ENCODE measurements at regions of chr7 and their contacts with region 1.

Region 1: DNA sequence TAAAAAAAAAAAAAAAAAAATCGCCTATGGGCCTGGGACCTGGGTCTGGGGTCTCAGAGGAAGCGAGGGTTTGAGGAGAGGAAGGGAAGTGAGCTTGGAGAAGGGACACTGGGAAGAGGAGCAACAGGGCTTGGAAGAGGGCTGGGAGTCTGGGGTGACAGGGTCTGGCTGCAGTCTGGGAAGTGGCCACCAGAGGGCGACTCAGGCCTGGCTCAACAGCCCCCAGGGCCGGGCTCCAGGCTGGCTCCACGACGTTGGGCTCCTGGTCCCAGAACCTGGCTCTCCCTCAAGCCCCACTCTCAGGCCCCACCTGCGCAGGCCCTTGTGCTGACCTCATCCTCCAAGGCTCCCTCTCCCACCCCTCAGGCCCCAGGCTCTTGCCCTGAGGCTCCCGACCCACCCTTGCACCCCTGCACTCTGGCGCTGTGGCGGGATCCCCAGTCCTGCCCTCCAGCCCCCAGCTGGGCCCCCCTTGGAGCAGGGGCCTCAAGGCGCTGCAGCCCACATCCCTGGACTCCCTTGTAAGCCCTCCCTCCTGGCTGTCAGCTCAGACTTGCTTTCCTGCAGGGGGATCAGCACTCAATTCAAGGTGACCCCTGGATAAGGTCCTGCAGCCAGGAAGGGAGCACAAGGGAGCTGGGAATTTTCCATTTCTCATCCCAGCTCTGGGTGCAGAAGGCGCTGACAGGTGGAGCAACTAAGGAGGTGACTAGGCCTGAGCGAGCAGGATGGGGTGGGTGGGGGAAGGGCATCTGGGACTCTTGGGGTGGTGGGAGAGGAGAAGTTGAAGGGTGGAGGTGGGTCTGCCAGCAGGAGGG is 5.4 kb upstream of the SPACDR start:
- DNase-seq: peak in 1 of 2 donors; percentile 90
- H3K4me3 ChIP-seq: no peak overlapping the region
- H3K27ac ChIP-seq: no peak overlapping the region
- H3K4me1 ChIP-seq: peaks cover 17 to 26% of the 10 kb centered on the region in 2 donors
- H3K27me3 ChIP-seq: no peaks in the 10 kb centered on the region
- CTCF ChIP-seq: peak; percentile 87 to 97 (median 95)

Region 2: GRCh38 chr7:100532165-100533022 is 63.0 kb after region 1 on chr7:
- intact Hi-C with region 1: no loop called
- DNase-seq: no peak
- H3K4me3 ChIP-seq: no peak overlapping the region
- H3K27ac ChIP-seq: no peak overlapping the region
- H3K4me1 ChIP-seq: no peaks in the 10 kb centered on the region
- H3K27me3 ChIP-seq: no peaks in the 10 kb centered on the region
- CTCF ChIP-seq: no peak

Region 3: DNA sequence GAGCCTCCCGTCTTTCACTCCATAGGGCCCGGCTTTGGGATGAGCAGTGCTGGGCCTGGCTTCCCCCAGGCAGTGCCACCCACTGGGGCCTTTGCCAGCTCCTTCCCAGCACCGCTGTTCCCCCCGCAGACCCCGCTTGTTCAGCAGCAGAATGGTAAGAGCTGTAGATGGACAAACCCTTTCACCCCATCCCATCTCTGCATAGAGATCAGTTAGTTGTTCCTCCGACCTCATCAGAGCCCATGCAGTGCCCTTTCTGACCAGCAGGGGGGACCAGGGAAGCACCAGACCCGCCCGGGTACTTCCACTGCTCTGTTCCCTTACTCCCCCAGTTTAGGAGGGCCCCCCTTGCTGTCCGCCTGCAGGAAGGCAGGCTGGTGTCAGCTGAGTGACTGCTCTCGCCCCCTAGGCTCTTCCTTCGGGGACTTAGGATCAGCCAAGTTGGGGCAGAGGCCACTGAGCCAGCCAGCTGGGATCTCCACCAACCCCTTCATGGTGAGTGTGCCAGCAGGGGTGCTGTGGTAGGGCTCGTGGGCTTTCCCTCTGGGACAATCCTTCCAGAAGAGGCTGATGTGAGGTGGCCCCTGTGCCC is 94.5 kb after region 1 on chr7:
- intact Hi-C with region 1: loop called (anchors 2 kb)
- DNase-seq: peak in 1 of 2 donors; percentile 89
- H3K4me3 ChIP-seq: no peak overlapping the region
- H3K27ac ChIP-seq: no peak overlapping the region
- H3K4me1 ChIP-seq: no peaks in the 10 kb centered on the region
- H3K27me3 ChIP-seq: no peaks in the 10 kb centered on the region
- CTCF ChIP-seq: peak; percentile 90 to 97 (median 95)

Region 4: GRCh38 chr7:100726996-100727761 is 257.7 kb after region 1 on chr7:
- intact Hi-C with region 1: loop called (anchors 5 kb)
- DNase-seq: no peak
- H3K4me3 ChIP-seq: no peak overlapping the region
- H3K27ac ChIP-seq: no peak overlapping the region
- H3K4me1 ChIP-seq: no peaks in the 10 kb centered on the region
- H3K27me3 ChIP-seq: no peaks in the 10 kb centered on the region
- CTCF ChIP-seq: no peak